H1 (cell line): ENCODE measurements at regions of chr2 and their contacts with region 1.

Region 1: GRCh38 chr2:1125633-1126370 is 175.2 kb downstream of the SNTG2 start:
- DNase-seq: no peak
- H3K4me3 ChIP-seq: no peak overlapping the region
- H3K27ac ChIP-seq: no peak overlapping the region
- H3K4me1 ChIP-seq: no peaks in the 10 kb centered on the region
- H3K27me3 ChIP-seq: no peaks in the 10 kb centered on the region
- CTCF ChIP-seq: no peak
- EP300 ChIP-seq: no peak
- POLR2A ChIP-seq: no peak
- RAD21 ChIP-seq: no peak

Region 2: DNA sequence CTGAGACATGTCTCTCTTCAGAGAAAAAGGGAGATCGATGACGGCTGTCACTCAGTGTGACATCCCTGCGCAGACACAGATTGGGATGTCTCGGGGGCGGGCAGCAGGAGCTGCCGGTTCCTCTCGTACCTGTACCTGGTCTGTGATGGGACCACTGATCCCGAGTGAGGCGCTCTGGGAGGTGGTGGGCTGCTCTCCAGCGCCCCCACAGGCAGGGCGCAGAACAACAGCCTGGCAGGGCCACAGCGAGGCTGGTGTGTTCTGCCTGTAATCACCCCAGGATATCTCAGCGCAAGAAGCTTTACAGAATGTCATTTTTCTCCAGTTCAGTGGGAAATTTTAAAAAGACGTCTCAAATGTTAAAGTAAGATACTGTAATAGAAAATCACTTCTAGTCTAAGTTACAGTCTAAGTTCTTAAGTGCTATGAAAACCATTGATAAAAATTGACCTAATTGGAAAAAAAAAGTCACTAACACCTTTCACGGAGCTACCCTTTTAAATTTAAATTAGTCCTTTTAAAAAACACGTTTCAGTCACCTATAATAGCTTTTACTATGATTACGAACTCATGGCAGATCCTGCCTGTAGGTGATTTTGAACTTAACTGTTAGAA is 14.7 kb after region 1 on chr2:
- CTCF ChIA-PET with region 1: interaction called, 25 read pairs
- POLR2A ChIA-PET with region 1: no interaction called
- DNase-seq: peak; percentile 51 to 93
- H3K4me3 ChIP-seq: no peak overlapping the region
- H3K27ac ChIP-seq: no peak overlapping the region
- H3K4me1 ChIP-seq: no peaks in the 10 kb centered on the region
- H3K27me3 ChIP-seq: no peaks in the 10 kb centered on the region
- CTCF ChIP-seq: peak; percentile 92 to 97 (median 94)
- EP300 ChIP-seq: no peak
- POLR2A ChIP-seq: no peak
- RAD21 ChIP-seq: peak; percentile 69 to 71